Heart left ventricle (tissue), 16 donors: ENCODE measurements at regions of chr13 and their contacts with region 1.

Region 1: DNA sequence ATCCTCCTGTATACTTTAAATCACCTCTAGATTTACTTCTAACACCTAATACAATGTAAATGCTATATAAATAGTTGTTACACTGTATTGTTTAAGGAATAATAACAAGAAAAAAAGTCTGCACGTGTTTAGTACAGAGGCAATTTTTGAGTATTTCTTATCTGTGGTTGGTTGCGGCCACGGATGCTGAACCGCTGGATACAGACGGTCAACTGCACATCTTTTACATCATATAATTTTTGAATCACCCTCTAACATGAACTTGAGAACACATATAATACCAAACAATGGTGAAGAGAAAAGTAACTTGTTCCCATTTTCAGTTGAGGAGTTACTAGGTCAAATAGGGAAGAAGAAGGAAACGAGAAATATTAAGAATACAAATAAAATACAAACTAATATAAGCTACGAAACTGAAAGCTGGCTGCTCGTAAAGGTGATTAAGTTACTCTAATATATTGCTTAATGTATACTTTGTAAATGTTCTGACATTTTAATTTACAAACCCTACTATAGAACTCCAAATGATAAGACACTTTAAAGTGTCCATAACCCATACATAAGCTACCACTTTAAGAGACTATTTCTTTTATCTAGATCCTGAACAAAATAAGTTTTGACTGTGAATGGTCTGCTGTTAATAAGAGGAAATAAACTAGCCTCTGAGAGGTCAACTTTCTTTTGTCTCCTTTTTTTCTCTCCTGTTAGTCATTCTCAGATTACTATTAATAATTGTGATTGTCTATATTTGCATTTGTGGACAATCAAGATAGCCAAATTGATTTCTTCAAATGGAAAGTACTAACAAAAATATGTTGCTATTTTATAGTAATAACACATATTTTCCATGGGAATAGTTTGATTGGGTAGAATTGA is 457.4 kb downstream of the DIAPH3 start:
- DNase-seq: no peak
- ATAC-seq: no peak
- H3K4me3 ChIP-seq: no peak overlapping the region
- H3K27ac ChIP-seq: no peak overlapping the region
- H3K4me1 ChIP-seq: no peaks in the 10 kb centered on the region
- H3K27me3 ChIP-seq: no peaks in the 10 kb centered on the region
- CTCF ChIP-seq: no peak
- POLR2A ChIP-seq: no peak

Region 2: DNA sequence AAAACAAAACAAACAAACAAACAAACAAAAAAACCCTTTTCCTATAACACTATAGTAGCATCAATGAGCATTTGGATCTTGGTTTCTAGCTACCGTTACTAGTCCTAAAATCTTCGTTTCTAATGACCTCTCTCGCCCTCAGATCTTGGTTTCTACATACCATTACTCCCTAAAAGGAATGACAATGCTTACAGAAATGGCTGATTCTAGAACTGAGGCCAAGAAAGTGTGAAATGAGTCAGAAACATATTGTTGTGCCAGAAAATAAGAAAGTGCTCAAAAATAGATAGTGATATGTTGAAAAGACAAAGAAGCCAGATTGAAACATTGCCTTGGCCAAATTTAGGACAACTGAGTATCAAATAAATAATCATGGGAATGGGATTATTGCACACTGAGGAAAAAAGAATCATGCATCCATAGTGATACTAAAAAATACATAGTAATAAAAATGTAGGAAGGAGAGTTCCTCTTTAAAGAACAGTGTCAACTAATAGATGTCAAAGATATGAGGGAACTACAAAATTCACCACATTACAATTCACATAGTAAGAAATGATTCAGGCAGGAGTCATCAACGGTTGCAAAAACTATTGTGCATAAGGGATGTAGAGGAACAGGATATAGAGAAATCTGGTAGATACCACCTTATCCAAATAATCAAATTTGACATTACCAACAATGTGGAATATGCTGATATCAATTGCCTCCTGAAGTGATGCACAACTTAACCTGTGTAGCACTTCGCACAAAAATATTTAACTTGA is 70.8 kb after region 1 on chr13:
- intact Hi-C with region 1: loop called in 1 of 10 experiments (anchors 10 kb)
- DNase-seq: no peak
- ATAC-seq: no peak
- H3K4me3 ChIP-seq: no peak overlapping the region
- H3K27ac ChIP-seq: no peak overlapping the region
- H3K4me1 ChIP-seq: no peaks in the 10 kb centered on the region
- H3K27me3 ChIP-seq: no peaks in the 10 kb centered on the region
- CTCF ChIP-seq: no peak
- POLR2A ChIP-seq: no peak